BJ (cell line): ENCODE measurements at regions of chr1 and their contacts with region 1.

Region 1: DNA sequence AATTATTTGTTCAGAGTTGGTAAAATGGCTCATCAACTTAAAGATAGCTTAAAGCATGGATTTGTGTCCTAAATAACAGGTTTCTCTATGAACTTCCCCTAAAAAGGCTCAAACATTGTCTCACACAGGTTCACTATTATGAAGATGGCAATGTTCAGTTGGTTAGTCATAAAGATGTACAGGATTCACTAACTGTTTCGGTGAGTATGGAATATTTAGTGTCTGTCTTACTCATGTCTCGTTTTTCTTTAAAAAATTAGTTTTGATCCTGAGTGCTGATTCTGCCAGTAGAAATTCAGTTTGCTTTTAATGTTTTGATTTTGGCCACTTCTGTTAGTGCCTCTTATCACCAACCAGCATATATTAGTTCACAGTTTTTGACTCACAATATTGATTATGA is 7.5 kb upstream of the MOV10 start:
- DNase-seq: no peak
- H3K4me3 ChIP-seq: no peak overlapping the region
- H3K27me3 ChIP-seq: no peaks in the 10 kb centered on the region
- CTCF ChIP-seq: no peak

Region 2: DNA sequence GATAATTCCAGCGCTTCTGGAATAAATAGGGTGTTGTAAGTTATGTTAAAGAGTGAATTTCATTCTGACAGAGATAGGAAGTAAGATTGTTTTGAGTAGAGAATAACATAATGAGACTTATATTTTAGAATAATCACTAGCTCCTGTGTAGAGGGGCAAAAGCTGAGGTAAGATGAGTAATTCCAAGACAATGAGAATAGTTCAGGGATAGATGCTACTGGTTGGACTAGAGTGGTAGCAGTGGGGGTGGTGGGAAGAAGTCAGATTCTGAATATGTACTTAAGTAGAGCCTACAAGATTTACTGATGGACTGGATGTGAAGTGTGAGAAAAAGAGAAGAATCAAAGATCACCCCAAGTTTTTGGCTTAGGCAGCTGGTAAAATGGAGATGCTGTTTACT is 15.7 kb before region 1 on chr1:
- CTCF ChIA-PET with region 1: interaction called, 15 read pairs
- POLR2A ChIA-PET with region 1: no interaction called
- DNase-seq: no peak
- H3K4me3 ChIP-seq: no peak overlapping the region
- H3K27me3 ChIP-seq: no peaks in the 10 kb centered on the region
- CTCF ChIP-seq: no peak

Region 3: GRCh38 chr1:112911506-112911905 is 244.6 kb after region 1 on chr1:
- CTCF ChIA-PET with region 1: no interaction called
- POLR2A ChIA-PET with region 1: no interaction called
- DNase-seq: no peak
- H3K4me3 ChIP-seq: no peak overlapping the region
- H3K27me3 ChIP-seq: no peaks in the 10 kb centered on the region
- CTCF ChIP-seq: no peak